Heart left ventricle (tissue), 16 donors: ENCODE measurements at regions of chr1 and their contacts with region 1.

Region 1: DNA sequence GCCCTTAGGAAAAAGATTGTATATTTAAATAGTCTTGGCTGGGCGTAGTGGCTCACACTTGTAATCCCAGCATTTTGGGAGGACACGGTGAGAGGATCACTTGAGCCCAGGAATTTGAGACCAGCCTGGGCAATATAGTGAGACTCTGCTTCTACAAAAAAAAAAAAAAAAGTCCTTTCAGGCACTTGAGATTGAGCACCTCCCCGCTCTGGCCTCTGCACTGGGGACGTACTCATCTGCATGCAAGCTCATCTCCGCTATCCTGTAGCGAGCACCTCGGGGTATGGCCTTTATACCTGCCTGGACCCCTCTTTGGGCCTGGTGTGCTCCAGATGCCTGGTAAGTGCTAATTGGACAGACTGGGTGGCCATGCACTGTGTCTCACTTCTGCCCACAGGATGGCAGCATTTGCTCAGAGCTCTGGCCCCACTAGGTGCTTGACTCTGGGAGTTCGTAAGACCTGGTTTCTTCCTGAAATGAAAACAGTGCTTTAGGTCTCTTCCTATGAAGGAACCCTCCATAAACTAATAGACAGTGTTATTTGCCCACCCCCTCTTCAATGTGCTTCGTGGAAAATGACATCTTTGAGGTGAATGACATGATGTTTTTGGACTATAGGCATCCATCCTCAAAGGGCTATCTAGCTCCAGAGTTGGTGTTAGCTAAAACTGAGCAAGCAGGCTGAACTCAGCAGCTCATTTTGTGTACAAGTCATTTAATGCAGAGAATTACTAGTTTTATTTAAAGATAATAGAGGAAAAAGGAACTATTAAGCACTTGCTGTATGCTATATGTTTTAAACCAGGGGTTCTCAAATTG is 61.7 kb upstream of the ADAR start:
- DNase-seq: peak; percentile 73 to 79 (median 76)
- ATAC-seq: peak; percentile 93 to 100 (median 98)
- H3K4me3 ChIP-seq: no peak overlapping the region
- H3K27ac ChIP-seq: no peak overlapping the region
- H3K4me1 ChIP-seq: peaks cover 0 to 3% (median 0%) of the 10 kb centered on the region in 12 donors
- H3K27me3 ChIP-seq: no peaks in the 10 kb centered on the region
- CTCF ChIP-seq: peak; percentile 69 to 90 (median 80)
- POLR2A ChIP-seq: no peak

Region 2: GRCh38 chr1:154567386-154568156 is 102.1 kb before region 1 on chr1 and contains the start of gene CHRNB2:
- intact Hi-C with region 1: loop called in 5 of 10 experiments (anchors 5 to 10 kb)
- DNase-seq: peak; percentile 65 to 81 (median 66)
- ATAC-seq: peak; percentile 68 to 98 (median 94)
- H3K4me3 ChIP-seq: peak within 1 kb of the TSS in 7 of 12 donors; percentile 8 to 30 (median 24)
- H3K27ac ChIP-seq: no peak within 1 kb of the TSS
- H3K4me1 ChIP-seq: peaks cover 0 to 13% (median 7%) of the 10 kb centered on the region in 12 donors
- H3K27me3 ChIP-seq: peaks cover 0 to 28% (median 0%) of the 10 kb centered on the region in 9 donors
- CTCF ChIP-seq: no peak
- POLR2A ChIP-seq: no peak
- total RNA-seq, gene CHRNB2: 0.05 to 0.14 (median 0.06) TPM in 3 of 9 donors, not detected in the others

Region 3: DNA sequence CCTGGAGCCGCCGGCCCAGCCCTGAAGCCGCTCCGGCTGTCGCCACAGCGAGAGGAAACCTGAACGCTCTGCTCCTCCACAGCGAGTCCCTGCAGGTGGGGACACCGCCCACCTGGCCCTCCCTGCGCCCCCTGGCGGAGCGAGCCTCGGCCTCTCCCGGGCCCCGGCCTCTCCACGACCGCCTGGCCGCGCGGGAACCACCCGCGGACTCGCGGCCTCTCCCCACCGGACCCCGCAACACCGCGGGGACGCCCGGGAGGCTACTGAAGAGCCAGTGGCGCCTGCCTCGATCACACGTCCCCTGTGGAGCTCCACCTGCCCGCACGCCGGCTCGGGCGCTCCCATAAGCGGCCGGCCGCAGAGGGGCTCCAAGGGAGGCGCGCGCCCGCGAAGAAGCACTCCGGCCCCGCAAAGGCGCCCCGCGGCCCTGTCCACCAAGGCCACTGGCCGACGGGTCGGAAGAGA is 90.8 kb after region 1 on chr1:
- intact Hi-C with region 1: loop called in 5 of 10 experiments (anchors 2 to 5 kb)
- DNase-seq: peak; percentile 43 to 88 (median 58)
- ATAC-seq: peak in 3 of 4 donors; percentile 82 to 92 (median 91)
- H3K4me3 ChIP-seq: peak overlapping the region; percentile 13 to 58 (median 44)
- H3K27ac ChIP-seq: peak overlapping the region in 1 of 12 donors; percentile 57
- H3K4me1 ChIP-seq: peaks cover 0 to 29% (median 17%) of the 10 kb centered on the region in 12 donors
- H3K27me3 ChIP-seq: peaks cover 0 to 33% (median 0%) of the 10 kb centered on the region in 9 donors
- CTCF ChIP-seq: peak; percentile 66 to 83 (median 74)
- POLR2A ChIP-seq: no peak

Region 4: GRCh38 chr1:154878371-154879022 is 208.8 kb after region 1 on chr1:
- intact Hi-C with region 1: loop called (anchors 1 to 2 kb)
- DNase-seq: peak; percentile 77 to 88 (median 80)
- ATAC-seq: peak; percentile 84 to 96 (median 94)
- H3K4me3 ChIP-seq: no peak overlapping the region
- H3K27ac ChIP-seq: no peak overlapping the region
- H3K4me1 ChIP-seq: peaks cover 0 to 4% (median 0%) of the 10 kb centered on the region in 12 donors
- H3K27me3 ChIP-seq: no peaks in the 10 kb centered on the region
- CTCF ChIP-seq: peak; percentile 70 to 92 (median 86)
- POLR2A ChIP-seq: no peak

Region 5: DNA sequence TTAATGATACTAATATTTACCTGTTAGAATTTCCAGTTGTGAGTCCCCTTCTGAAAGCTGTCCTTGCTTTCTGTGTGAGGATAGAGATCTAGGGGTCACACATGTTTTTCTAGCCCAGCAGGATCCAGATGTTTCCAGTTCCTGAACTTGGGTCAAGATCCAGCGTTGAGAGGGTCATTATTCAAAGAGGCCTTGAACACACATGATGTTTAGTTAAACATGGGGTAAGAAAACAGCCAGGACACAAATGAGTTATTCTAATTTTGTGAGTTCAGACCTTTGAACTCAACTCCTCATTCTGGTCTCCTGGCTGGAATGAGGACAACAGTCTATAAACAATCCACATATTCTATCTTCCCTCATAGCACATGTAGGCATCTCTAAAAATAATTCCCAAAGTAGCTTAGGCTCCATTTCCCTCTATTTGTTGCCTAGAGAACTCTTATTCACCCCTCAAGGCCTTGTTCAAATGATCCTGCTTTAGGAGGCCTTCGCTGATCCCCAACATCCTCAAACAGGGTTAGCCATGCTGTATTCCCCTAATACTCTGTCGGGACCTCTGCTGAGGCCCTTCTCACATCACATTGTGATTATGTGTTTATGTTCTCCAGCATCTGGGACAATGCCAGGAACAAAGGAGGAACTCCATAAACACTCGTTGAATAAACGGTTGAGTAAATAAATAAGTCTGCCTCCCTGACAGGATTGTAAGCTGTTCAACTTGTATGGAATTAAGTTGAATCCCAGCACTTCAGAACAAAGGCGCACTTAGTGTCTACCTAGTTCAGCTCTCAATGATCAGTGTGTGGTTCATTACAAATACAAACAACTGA is 215.4 kb after region 1 on chr1:
- intact Hi-C with region 1: loop called in 1 of 10 experiments (anchors 2 kb)
- DNase-seq: no peak
- ATAC-seq: peak in 1 of 4 donors; percentile 39
- H3K4me3 ChIP-seq: no peak overlapping the region
- H3K27ac ChIP-seq: peak overlapping the region in 1 of 12 donors; percentile 0
- H3K4me1 ChIP-seq: peaks cover 0 to 16% (median 5%) of the 10 kb centered on the region in 12 donors
- H3K27me3 ChIP-seq: no peaks in the 10 kb centered on the region
- CTCF ChIP-seq: no peak
- POLR2A ChIP-seq: no peak

Region 6: GRCh38 chr1:155084722-155085503 is 415.2 kb after region 1 on chr1:
- intact Hi-C with region 1: loop called in 1 of 10 experiments (anchors 5 kb)
- DNase-seq: peak; percentile 92 to 96 (median 93)
- ATAC-seq: peak; percentile 83 to 91 (median 88)
- H3K4me3 ChIP-seq: peak overlapping the region; percentile 52 to 87 (median 73)
- H3K27ac ChIP-seq: peak overlapping the region; percentile 65 to 97 (median 88)
- H3K4me1 ChIP-seq: peaks cover 9 to 63% (median 44%) of the 10 kb centered on the region in 12 donors
- H3K27me3 ChIP-seq: peaks cover 38 to 46% (median 45%) of the 10 kb centered on the region in 9 donors
- CTCF ChIP-seq: peak; percentile 89 to 98 (median 93)
- POLR2A ChIP-seq: no peak